ENCODE measurements at regions of chr6 and their contacts with region 1.

Region 1: GRCh38 chr6:3742426-3743344 is 8.8 kb downstream of the PXDC1 start:
- DNase-seq: peak; percentile 68 to 80
- ATAC-seq: peak; percentile 72 to 87
- H3K4me3 ChIP-seq: peak overlapping the region; percentile 26 to 42 (median 30)
- H3K27ac ChIP-seq: peak overlapping the region; percentile 71 to 96 (median 90)
- H3K4me1 ChIP-seq: peaks cover 39 to 73% of the 10 kb centered on the region in 2 donors
- H3K27me3 ChIP-seq: no peaks in the 10 kb centered on the region
- CTCF ChIP-seq: peak; percentile 93 to 97 (median 95)
- POLR2A ChIP-seq: no peak

Region 2: GRCh38 chr6:3139090-3139903 is 603.4 kb before region 1 on chr6:
- in situ Hi-C with region 1: loop called in 1 of 4 experiments (anchors 25 kb)
- intact Hi-C with region 1: no loop called
- DNase-seq: peak; percentile 65 to 78
- ATAC-seq: peak; percentile 86 to 95
- H3K4me3 ChIP-seq: no peak overlapping the region
- H3K27ac ChIP-seq: peak overlapping the region; percentile 47 to 75 (median 70)
- H3K4me1 ChIP-seq: peaks cover 8 to 20% of the 10 kb centered on the region in 2 donors
- H3K27me3 ChIP-seq: no peaks in the 10 kb centered on the region
- CTCF ChIP-seq: no peak
- POLR2A ChIP-seq: no peak

Region 3: DNA sequence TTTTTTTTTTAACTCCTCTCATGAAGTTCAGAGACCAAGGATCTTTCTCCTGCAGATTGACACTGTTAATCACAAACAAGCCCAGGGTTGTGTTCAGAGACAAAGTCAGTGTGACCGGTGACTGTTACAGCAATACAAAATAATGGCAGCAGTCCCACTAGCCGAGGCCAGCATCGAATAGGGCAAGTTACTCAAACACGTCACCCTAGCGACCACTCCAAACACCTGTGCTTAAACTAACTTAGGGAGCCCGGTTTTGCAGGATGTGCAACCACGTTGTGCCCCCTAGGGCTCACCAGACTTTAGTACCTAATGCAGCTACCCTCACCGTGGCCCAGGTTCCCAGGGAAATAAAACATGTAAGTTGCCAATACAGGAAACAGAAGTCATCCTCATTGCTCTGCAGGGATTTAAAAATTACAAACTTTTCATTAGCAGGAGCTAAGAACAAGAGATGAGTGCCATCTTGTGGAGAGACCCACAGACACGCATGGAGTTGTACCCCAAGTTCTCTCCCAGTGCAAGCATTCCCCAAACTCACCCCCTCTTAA is 144.5 kb after region 1 on chr6:
- in situ Hi-C with region 1: loop called in 1 of 4 experiments (anchors 5 kb)
- intact Hi-C with region 1: loop called (anchors 1 kb)
- DNase-seq: peak in 1 of 2 donors; percentile 12
- ATAC-seq: no peak
- H3K4me3 ChIP-seq: no peak overlapping the region
- H3K27ac ChIP-seq: peak overlapping the region in 3 of 4 donors; percentile 48 to 70 (median 57)
- H3K4me1 ChIP-seq: peaks cover 36 to 46% of the 10 kb centered on the region in 2 donors
- H3K27me3 ChIP-seq: no peaks in the 10 kb centered on the region
- CTCF ChIP-seq: peak in 4 of 5 experiments; percentile 42 to 60 (median 52)
- POLR2A ChIP-seq: no peak

Region 4: GRCh38 chr6:3939964-3940363 is 197.3 kb after region 1 on chr6:
- in situ Hi-C with region 1: loop called in 1 of 4 experiments (anchors 10 kb)
- intact Hi-C with region 1: no loop called
- DNase-seq: no peak
- ATAC-seq: no peak
- H3K4me3 ChIP-seq: no peak overlapping the region
- H3K27ac ChIP-seq: no peak overlapping the region
- H3K4me1 ChIP-seq: no peaks in the 10 kb centered on the region
- H3K27me3 ChIP-seq: peaks cover 0 to 7% (median 6%) of the 10 kb centered on the region in 3 donors
- CTCF ChIP-seq: no peak
- POLR2A ChIP-seq: no peak

Region 5: DNA sequence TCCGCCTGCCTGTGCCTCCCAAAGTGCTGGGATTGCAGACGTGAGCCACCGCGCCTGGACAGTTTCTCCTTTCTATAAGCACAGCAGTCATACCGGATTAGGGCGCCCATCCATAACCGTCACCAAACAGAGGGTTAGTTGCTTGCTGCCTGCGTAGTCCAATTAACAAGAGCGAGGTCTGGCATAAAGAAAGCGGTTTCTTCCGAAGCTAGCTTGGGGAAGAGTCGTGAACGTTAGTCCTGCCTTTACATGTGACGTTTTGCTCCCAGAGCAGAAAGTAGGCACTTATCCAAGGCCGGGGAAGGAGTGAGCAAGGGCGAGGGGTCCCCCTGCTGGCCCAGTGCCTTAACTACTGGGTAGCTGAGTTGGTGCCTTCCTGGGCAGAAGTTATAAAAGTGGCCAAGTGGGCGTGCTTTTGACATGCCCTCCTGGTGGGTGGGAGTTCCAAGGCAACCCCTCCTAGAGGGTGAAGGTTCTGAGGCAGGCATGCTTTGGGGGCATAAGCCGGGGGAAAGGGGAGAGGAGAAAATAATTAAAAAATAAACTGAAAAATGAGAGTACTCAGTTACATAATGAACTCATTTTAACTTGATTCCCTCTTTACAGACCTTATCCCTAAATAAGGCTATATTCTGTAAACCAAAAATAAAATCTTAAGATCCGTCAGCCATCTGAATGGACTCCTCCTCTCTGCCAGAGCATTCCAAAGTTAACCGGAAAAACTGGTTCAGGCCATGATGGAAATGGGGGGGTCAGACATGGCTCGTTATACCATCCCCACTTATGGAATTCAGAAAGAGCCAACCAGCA is 248.2 kb after region 1 on chr6:
- in situ Hi-C with region 1: loop called in 2 of 4 experiments (anchors 5 kb)
- intact Hi-C with region 1: loop called (anchors 1 kb)
- DNase-seq: peak; percentile 67 to 77
- ATAC-seq: peak; percentile 83 to 89
- H3K4me3 ChIP-seq: peak overlapping the region; percentile 52 to 58 (median 55)
- H3K27ac ChIP-seq: peak overlapping the region; percentile 47 to 60 (median 54)
- H3K4me1 ChIP-seq: peaks cover 10 to 12% of the 10 kb centered on the region in 2 donors
- H3K27me3 ChIP-seq: no peaks in the 10 kb centered on the region
- CTCF ChIP-seq: peak; percentile 63 to 76 (median 70)
- POLR2A ChIP-seq: no peak

Region 6: GRCh38 chr6:4018172-4018905 is 275.7 kb after region 1 on chr6:
- in situ Hi-C with region 1: no loop called
- intact Hi-C with region 1: loop called (anchors 2 kb)
- DNase-seq: peak; percentile 89 to 91
- ATAC-seq: peak; percentile 71 to 73
- H3K4me3 ChIP-seq: peak overlapping the region; percentile 83 to 90 (median 86)
- H3K27ac ChIP-seq: peak overlapping the region; percentile 96 to 98 (median 97)
- H3K4me1 ChIP-seq: peaks cover 34 to 48% of the 10 kb centered on the region in 2 donors
- H3K27me3 ChIP-seq: no peaks in the 10 kb centered on the region
- CTCF ChIP-seq: peak; percentile 51 to 60 (median 55)
- POLR2A ChIP-seq: peak; percentile 89 to 94

Region 7: DNA sequence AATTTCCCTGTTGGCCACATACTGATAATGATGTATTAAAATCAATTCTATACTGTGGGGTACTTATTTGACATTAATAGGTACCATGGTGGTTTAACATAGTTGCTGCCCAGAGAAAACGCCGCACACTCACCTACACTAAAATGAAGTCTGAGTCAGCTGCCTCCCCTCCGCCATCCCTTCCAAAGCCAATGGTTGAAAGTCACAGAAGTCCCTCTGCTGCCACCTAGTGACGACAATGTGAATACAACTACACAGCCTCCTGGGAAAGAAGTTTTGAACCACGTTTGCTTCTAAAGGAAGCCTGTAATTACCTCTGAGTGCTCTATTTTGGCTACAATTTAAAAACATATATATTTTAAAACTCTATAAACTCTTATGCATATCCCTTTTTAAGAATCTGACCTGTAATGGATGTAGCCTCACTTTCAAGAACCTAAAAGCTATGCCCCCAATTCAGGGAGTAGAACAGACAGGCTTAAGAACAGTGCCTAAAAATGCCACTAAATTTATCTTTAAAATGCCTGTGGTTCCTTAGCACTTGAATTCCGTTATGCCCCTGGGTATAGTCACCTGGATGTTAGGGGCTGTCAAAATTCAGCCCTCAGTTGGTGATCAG is 413.3 kb after region 1 on chr6:
- in situ Hi-C with region 1: no loop called
- intact Hi-C with region 1: loop called (anchors 5 kb)
- DNase-seq: peak; percentile 70 to 79
- ATAC-seq: peak; percentile 93 to 94
- H3K4me3 ChIP-seq: peak overlapping the region in 1 of 4 donors; percentile 10
- H3K27ac ChIP-seq: no peak overlapping the region
- H3K4me1 ChIP-seq: no peaks in the 10 kb centered on the region
- H3K27me3 ChIP-seq: no peaks in the 10 kb centered on the region
- CTCF ChIP-seq: peak; percentile 74 to 92 (median 86)
- POLR2A ChIP-seq: no peak

Region 8: GRCh38 chr6:4180652-4181255 is 438.1 kb after region 1 on chr6:
- in situ Hi-C with region 1: no loop called
- intact Hi-C with region 1: no loop called
- DNase-seq: no peak
- ATAC-seq: peak; percentile 69
- H3K4me3 ChIP-seq: no peak overlapping the region
- H3K27ac ChIP-seq: no peak overlapping the region
- H3K4me1 ChIP-seq: no peaks in the 10 kb centered on the region
- H3K27me3 ChIP-seq: no peaks in the 10 kb centered on the region
- CTCF ChIP-seq: no peak
- POLR2A ChIP-seq: no peak